BJ (cell line): ENCODE measurements at regions of chr6 and their contacts with region 1.

Region 1: GRCh38 chr6:33425668-33426577 is 6.1 kb downstream of the SYNGAP1 start:
- DNase-seq: peak; percentile 28
- H3K4me3 ChIP-seq: peak overlapping the region; percentile 42
- H3K27me3 ChIP-seq: no peaks in the 10 kb centered on the region
- CTCF ChIP-seq: peak; percentile 72

Region 2: GRCh38 chr6:33384581-33385020 is 41.3 kb before region 1 on chr6:
- CTCF ChIA-PET with region 1: interaction called, 19 read pairs
- POLR2A ChIA-PET with region 1: no interaction called
- DNase-seq: peak; percentile 46
- H3K4me3 ChIP-seq: no peak overlapping the region
- H3K27me3 ChIP-seq: peaks cover 1% of the 10 kb centered on the region; the same call in 1 of the 2 replicates
- CTCF ChIP-seq: peak; percentile 72

Region 3: DNA sequence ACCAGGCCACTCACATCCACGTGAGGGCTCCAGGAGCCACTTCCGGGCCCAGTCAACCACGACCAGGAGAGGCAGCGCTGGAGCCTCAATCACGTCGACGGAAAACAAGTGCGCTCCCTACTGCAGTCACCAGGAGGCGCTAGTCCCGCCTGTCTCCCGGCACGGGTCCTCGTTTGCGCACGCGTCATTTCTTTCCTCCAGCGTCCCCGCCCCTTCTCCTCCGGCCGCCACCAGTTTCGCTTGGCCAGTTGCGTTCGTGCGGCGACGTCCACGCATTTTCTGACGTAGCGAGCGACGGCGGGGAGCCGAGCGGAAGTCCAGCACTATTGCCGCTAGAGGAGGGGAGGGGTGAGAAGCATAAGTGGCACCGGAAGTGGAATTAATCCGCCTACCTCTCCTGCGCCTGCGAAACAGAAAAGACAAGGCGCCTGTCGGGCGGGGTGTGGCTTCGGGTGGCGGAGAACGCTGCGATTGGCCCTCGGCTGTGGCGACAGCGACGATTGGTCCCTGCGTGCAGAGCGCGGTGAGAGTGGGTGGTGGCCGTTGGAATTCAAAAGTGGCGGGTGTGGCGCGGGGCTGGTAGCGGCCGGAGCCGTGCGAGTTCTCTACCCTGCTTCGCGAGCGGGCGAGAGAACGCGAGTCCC is 34.5 kb before region 1 on chr6 and contains the start of gene KIFC1:
- CTCF ChIA-PET with region 1: interaction called, 19 read pairs
- POLR2A ChIA-PET with region 1: no interaction called
- DNase-seq: peak; percentile 99
- H3K4me3 ChIP-seq: peak within 1 kb of the TSS; percentile 87
- H3K27me3 ChIP-seq: no peaks in the 10 kb centered on the region
- CTCF ChIP-seq: peak; percentile 99
- polyA plus RNA-seq, gene KIFC1: 24.2 and 32.4 TPM in 2 replicates